GM18951 (cell line): ENCODE measurements at regions of chr1 and their contacts with region 1.

Region 1: GRCh38 chr1:39488793-39489566 is 2.5 kb upstream of the BMP8A start:
- POLR2A ChIP-seq: no peak

Region 2: DNA sequence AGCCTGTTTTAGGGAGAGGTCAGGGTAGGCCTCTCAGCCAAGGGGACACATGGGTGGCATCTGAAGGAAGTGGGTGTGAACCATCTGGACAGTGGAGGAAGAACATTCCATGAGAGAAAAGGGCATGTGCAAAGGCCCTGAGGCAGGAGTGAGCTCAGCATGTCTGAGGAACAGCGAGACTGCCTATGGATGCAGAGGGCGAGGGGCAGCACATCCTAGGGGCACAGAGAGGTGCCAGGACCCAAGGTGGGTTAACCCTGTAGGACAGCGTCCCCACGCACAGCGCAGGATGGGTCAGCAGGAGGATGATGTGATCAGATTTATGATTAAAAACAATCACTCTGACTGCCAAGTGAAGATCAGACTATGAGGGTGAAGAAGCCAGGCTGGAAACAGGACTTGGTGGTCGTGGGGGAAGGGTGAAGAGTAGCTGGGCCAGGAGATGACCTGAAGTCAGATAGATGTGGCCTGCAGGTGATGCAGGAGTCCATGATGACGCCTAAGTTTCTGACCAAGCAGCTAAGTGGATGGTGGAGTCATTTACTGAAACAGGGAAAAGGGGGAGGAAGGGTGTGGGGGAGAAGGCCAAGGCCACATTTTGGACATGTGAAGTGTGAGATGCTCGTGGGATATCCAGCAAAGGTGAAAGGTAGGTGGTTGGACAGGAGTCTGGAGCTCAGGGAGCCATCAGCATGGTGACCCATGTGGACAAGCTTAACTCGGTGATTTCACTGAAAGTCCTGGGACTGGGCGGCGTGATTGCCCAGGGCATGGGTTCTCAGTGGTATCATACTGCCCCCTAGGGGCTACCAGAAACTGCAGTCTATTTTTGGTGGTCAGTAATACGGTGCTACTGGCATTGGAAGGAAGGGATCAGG is 49.8 kb after region 1 on chr1:
- in situ Hi-C with region 1: loop called (anchors 10 kb)
- POLR2A ChIP-seq: no peak

Region 3: DNA sequence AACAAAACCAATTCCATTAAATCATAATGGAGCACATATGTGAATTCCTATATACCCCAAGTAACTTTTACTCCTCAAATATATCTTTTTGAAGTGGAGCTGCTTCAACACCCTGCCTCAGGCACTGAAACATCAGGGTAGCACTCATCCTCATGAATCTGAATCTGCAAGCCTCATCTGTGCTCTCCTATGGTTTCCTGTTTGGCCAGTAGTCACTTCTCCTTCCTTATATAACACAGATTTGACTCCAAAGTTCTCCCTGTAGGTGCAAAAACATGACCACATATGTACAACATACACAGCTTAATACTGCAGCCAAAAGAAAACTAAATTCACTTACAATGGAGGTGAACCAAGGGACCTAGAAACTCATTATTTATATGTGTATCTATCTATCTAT is 387.2 kb after region 1 on chr1:
- in situ Hi-C with region 1: no loop called
- POLR2A ChIP-seq: no peak